ENCODE measurements at regions of chr7 and their contacts with region 1.

Region 1: DNA sequence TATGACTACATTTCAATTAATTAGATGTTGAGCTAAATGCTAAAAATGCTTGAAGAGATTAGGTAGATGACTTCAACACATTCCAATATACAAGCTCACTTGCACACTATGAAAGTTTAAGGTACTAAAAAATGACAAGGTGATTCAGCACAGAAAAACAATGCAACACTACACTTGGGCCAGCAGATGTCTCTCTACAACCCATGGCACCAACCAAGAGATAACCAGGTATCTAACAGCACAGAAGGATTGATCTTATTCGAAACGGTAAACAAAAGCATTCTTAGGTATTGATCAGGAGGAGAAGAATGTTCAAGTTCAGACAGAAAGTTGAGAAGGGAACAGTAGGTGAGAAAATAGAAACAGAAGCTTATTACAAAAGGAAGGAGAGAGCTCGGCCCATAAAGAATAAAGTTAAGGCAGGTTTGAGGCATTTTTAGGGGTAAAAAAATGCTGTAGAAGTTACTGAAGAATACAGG is 248.2 kb upstream of the KLF14 start:
- DNase-seq: no peak
- ATAC-seq: peak; percentile 97
- H3K4me3 ChIP-seq: no peak overlapping the region
- H3K27ac ChIP-seq: no peak overlapping the region
- H3K4me1 ChIP-seq: peaks cover 3% of the 10 kb centered on the region; the same call in 1 of the 2 replicates
- H3K27me3 ChIP-seq: no peaks in the 10 kb centered on the region
- CTCF ChIP-seq: peak; percentile 81 to 86 (median 85)
- EP300 ChIP-seq: no peak
- POLR2A ChIP-seq: no peak
- RAD21 ChIP-seq: peak; percentile 81

Region 2: GRCh38 chr7:130430841-130431666 is 551.1 kb before region 1 on chr7:
- CTCF ChIA-PET with region 1: no interaction called
- POLR2A ChIA-PET with region 1: no interaction called
- RAD21 ChIA-PET with region 1: no interaction called
- SMC1A ChIA-PET with region 1: no interaction called
- in situ Hi-C with region 1: no loop called
- intact Hi-C with region 1: no loop called
- DNase-seq: no peak
- ATAC-seq: no peak
- H3K4me3 ChIP-seq: no peak overlapping the region
- H3K27ac ChIP-seq: no peak overlapping the region
- H3K4me1 ChIP-seq: no peaks in the 10 kb centered on the region
- H3K27me3 ChIP-seq: no peaks in the 10 kb centered on the region
- CTCF ChIP-seq: no peak
- EP300 ChIP-seq: no peak
- POLR2A ChIP-seq: no peak
- RAD21 ChIP-seq: no peak

Region 3: GRCh38 chr7:130595986-130596385 is 386.2 kb before region 1 on chr7:
- CTCF ChIA-PET with region 1: no interaction called
- POLR2A ChIA-PET with region 1: no interaction called
- RAD21 ChIA-PET with region 1: no interaction called
- SMC1A ChIA-PET with region 1: no interaction called
- in situ Hi-C with region 1: no loop called
- intact Hi-C with region 1: no loop called
- DNase-seq: no peak
- ATAC-seq: no peak
- H3K4me3 ChIP-seq: no peak overlapping the region
- H3K27ac ChIP-seq: no peak overlapping the region
- H3K4me1 ChIP-seq: no peaks in the 10 kb centered on the region
- H3K27me3 ChIP-seq: no peaks in the 10 kb centered on the region
- CTCF ChIP-seq: no peak
- EP300 ChIP-seq: no peak
- POLR2A ChIP-seq: no peak
- RAD21 ChIP-seq: no peak

Region 4: GRCh38 chr7:130814778-130815335 is 167.3 kb before region 1 on chr7:
- CTCF ChIA-PET with region 1: no interaction called
- POLR2A ChIA-PET with region 1: no interaction called
- RAD21 ChIA-PET with region 1: no interaction called
- SMC1A ChIA-PET with region 1: no interaction called
- in situ Hi-C with region 1: no loop called
- intact Hi-C with region 1: no loop called
- DNase-seq: no peak
- ATAC-seq: no peak
- H3K4me3 ChIP-seq: no peak overlapping the region
- H3K27ac ChIP-seq: no peak overlapping the region
- H3K4me1 ChIP-seq: no peaks in the 10 kb centered on the region
- H3K27me3 ChIP-seq: no peaks in the 10 kb centered on the region
- CTCF ChIP-seq: peak; percentile 15 to 31 (median 30); a peak in 1 of 6 replicates
- EP300 ChIP-seq: no peak
- POLR2A ChIP-seq: no peak
- RAD21 ChIP-seq: peak; percentile 41

Region 5: GRCh38 chr7:130887182-130888016 is 94.8 kb before region 1 on chr7:
- CTCF ChIA-PET with region 1: interaction called, 12 read pairs
- POLR2A ChIA-PET with region 1: interaction called, 3 read pairs
- RAD21 ChIA-PET with region 1: no interaction called
- SMC1A ChIA-PET with region 1: interaction called, 6 read pairs
- in situ Hi-C with region 1: no loop called
- intact Hi-C with region 1: no loop called
- DNase-seq: no peak
- ATAC-seq: no peak
- H3K4me3 ChIP-seq: no peak overlapping the region
- H3K27ac ChIP-seq: no peak overlapping the region
- H3K4me1 ChIP-seq: no peaks in the 10 kb centered on the region
- H3K27me3 ChIP-seq: no peaks in the 10 kb centered on the region
- CTCF ChIP-seq: no peak
- EP300 ChIP-seq: no peak
- POLR2A ChIP-seq: peak; percentile 64
- RAD21 ChIP-seq: no peak

Region 6: DNA sequence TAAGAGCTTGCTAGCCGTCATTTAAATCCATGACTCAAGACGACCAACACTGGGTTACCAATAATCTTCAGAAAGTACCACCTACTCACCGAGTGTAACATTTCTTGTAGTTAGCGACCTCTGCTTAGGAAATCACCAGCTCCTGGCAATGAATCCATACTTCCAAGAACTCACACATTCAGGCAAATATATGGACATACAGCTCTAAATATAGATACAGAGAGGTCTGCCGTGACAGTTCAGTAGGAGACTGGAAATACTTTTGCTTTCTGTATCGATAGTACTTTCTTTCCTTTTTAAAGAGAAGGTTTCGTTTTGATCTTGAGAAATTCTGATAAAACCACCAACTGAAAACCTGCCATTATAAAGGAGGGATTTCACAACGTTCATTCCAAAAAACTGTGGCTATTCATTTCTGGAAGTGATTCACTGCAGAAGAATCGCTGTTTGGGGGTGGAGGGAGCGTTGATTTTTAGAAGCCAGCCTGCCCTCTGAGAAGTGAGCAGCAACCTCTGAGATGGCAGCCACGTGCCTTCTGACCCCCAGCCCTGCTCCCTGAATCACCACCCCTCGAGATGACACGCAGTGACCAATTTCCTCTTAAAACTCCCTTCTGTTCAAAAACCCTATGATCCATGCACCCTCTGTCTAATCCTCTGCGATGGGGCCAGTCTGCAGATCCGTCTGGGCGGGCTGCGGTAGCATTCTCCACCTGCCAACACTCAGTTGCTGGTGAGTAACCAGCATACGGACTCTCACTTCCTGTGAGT is 69.2 kb before region 1 on chr7:
- CTCF ChIA-PET with region 1: interaction called, 16 read pairs
- POLR2A ChIA-PET with region 1: interaction called, 3 read pairs
- RAD21 ChIA-PET with region 1: interaction called, 5 read pairs
- SMC1A ChIA-PET with region 1: interaction called, 5 read pairs
- in situ Hi-C with region 1: no loop called
- intact Hi-C with region 1: no loop called
- DNase-seq: peak; percentile 80
- ATAC-seq: peak; percentile 95
- H3K4me3 ChIP-seq: peak overlapping the region; percentile 58
- H3K27ac ChIP-seq: peak overlapping the region; percentile 94
- H3K4me1 ChIP-seq: peaks cover 44% of the 10 kb centered on the region
- H3K27me3 ChIP-seq: no peaks in the 10 kb centered on the region
- CTCF ChIP-seq: no peak
- EP300 ChIP-seq: peak; percentile 39 to 78
- POLR2A ChIP-seq: peak; percentile 66
- RAD21 ChIP-seq: no peak

Region 7: GRCh38 chr7:130966246-130967009 is 15.8 kb before region 1 on chr7:
- CTCF ChIA-PET with region 1: interaction called, 62 read pairs
- POLR2A ChIA-PET with region 1: interaction called, 4 read pairs
- RAD21 ChIA-PET with region 1: interaction called, 18 read pairs
- SMC1A ChIA-PET with region 1: interaction called, 57 read pairs
- in situ Hi-C with region 1: no loop called
- intact Hi-C with region 1: no loop called
- DNase-seq: peak; percentile 45
- ATAC-seq: peak; percentile 85
- H3K4me3 ChIP-seq: no peak overlapping the region
- H3K27ac ChIP-seq: no peak overlapping the region
- H3K4me1 ChIP-seq: peaks cover 39% of the 10 kb centered on the region
- H3K27me3 ChIP-seq: no peaks in the 10 kb centered on the region
- CTCF ChIP-seq: no peak
- EP300 ChIP-seq: peak; percentile 52 to 74; a peak in 2 of 4 replicates
- POLR2A ChIP-seq: no peak
- RAD21 ChIP-seq: no peak

Region 8: DNA sequence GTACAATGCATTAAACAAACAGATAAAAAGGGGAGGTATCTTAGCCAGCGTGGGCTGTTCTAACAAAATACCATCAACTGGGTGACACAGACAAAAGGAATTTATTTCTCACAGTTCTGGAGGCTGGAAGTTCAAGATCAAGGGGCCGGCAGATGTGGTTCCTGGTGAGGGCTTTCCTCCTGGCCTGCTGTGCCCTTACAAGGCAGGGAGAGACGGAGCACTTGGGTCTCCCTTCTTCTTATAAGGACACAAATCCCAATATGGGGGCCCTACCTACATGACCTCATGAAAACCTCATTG is 33.4 kb after region 1 on chr7:
- CTCF ChIA-PET with region 1: interaction called, 15 read pairs
- POLR2A ChIA-PET with region 1: no interaction called
- RAD21 ChIA-PET with region 1: interaction called, 8 read pairs
- SMC1A ChIA-PET with region 1: interaction called, 15 read pairs
- in situ Hi-C with region 1: no loop called
- intact Hi-C with region 1: no loop called
- DNase-seq: no peak
- ATAC-seq: no peak
- H3K4me3 ChIP-seq: no peak overlapping the region
- H3K27ac ChIP-seq: no peak overlapping the region
- H3K4me1 ChIP-seq: peaks cover 34% of the 10 kb centered on the region
- H3K27me3 ChIP-seq: no peaks in the 10 kb centered on the region
- CTCF ChIP-seq: no peak
- EP300 ChIP-seq: no peak
- POLR2A ChIP-seq: no peak
- RAD21 ChIP-seq: no peak

Region 9: DNA sequence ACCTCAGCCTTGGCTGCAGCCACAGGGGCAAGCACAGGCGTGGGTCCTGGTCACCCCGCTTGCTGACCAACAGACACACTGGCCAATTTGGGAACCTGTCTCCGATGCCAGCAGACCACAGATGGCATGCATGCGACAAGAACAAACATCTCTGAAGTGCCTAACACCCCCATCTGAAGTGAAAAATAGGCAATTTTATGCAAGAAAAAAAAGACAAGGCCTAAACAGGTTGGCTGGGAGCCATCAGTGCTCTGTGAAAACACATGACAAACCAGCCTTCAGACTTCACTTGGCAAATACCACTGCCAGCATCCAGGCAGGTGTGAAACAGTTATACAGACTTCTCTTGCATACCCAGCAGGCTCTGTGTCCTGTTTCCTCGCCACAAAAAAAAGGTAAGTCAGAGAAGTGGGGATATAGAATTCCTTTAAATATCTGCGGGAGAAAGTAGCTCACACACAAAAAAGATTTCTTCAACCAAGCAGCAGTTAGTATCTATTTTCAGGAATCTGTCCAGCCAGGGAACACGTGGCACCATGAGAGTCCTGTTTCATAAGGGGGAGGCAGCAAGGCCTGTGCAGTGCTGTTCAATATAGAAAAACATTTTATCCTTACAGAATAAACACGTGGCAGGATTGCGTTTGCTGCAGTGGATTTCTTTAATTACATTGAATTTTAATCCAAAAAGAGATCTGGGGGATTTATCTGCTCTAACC is 52.1 kb after region 1 on chr7:
- CTCF ChIA-PET with region 1: interaction called, 150 read pairs
- POLR2A ChIA-PET with region 1: no interaction called
- RAD21 ChIA-PET with region 1: interaction called, 80 read pairs
- SMC1A ChIA-PET with region 1: interaction called, 111 read pairs
- in situ Hi-C with region 1: no loop called
- intact Hi-C with region 1: no loop called
- DNase-seq: no peak
- ATAC-seq: peak; percentile 7; the same call in 1 of the 3 replicates
- H3K4me3 ChIP-seq: no peak overlapping the region
- H3K27ac ChIP-seq: peak overlapping the region; percentile 76
- H3K4me1 ChIP-seq: peaks cover 63% of the 10 kb centered on the region
- H3K27me3 ChIP-seq: no peaks in the 10 kb centered on the region
- CTCF ChIP-seq: no peak
- EP300 ChIP-seq: no peak
- POLR2A ChIP-seq: peak; percentile 52; the same call in 1 of the 2 replicates
- RAD21 ChIP-seq: no peak